Endothelial cell of umbilical vein (primary cell): ENCODE measurements at regions of chr6 and their contacts with region 1.

Region 1: DNA sequence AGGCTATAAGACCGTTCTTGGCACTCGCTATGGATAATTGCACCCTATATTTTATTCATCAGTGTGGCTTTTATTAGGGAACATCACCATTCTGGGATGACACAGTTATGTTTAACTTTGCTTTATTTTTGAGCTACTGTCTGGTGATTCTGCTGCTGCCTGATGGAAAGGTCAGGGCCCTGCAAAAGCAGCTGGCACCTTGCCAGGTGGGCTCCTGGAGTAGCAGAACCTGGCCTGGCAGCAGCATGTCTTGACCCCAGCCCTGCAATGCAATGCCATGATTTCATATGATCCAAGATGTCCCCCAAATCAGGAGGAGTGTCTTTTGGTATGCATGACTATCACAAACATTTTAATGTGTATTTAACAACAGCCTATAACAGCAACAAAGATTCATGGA is 228.4 kb upstream of the RSPO3 start:
- DNase-seq: peak; percentile 14
- H3K4me3 ChIP-seq: no peak overlapping the region
- H3K27ac ChIP-seq: peak overlapping the region; percentile 76
- H3K4me1 ChIP-seq: peaks cover 37% of the 10 kb centered on the region
- H3K27me3 ChIP-seq: no peaks in the 10 kb centered on the region
- CTCF ChIP-seq: no peak
- POLR2A ChIP-seq: no peak

Region 2: GRCh38 chr6:126811321-126811720 is 78.7 kb before region 1 on chr6:
- CTCF ChIA-PET with region 1: interaction called, 10 read pairs
- POLR2A ChIA-PET with region 1: no interaction called
- dilution Hi-C with region 1: no loop called
- intact Hi-C with region 1: loop called (anchors 1 kb)
- DNase-seq: peak; percentile 85
- H3K4me3 ChIP-seq: no peak overlapping the region
- H3K27ac ChIP-seq: peak overlapping the region; percentile 79
- H3K4me1 ChIP-seq: peaks cover 27% of the 10 kb centered on the region
- H3K27me3 ChIP-seq: no peaks in the 10 kb centered on the region
- CTCF ChIP-seq: no peak
- POLR2A ChIP-seq: no peak

Region 3: DNA sequence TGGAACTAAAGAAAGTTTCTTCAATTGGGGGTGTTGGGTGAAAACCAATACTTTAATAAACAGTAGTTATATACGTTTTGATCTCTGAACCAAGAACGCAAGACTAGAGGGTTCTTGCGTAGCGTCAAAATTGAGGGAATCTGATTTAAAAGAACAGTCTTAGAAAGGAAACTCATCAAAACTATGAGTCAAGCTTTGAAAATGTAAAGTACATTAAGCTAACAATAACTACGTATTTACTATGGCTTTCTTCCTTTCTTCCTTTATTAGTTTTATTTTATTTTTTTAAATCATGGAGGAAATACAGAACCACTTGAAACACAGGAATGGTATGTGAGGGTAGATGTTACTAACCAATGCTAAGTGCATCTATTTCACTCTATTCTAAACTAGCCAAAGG is 58.6 kb before region 1 on chr6:
- CTCF ChIA-PET with region 1: no interaction called
- POLR2A ChIA-PET with region 1: no interaction called
- dilution Hi-C with region 1: no loop called
- intact Hi-C with region 1: loop called (anchors 1 kb)
- DNase-seq: peak; percentile 72
- H3K4me3 ChIP-seq: no peak overlapping the region
- H3K27ac ChIP-seq: peak overlapping the region; percentile 88
- H3K4me1 ChIP-seq: peaks cover 20% of the 10 kb centered on the region
- H3K27me3 ChIP-seq: no peaks in the 10 kb centered on the region
- CTCF ChIP-seq: no peak
- POLR2A ChIP-seq: no peak

Region 4: DNA sequence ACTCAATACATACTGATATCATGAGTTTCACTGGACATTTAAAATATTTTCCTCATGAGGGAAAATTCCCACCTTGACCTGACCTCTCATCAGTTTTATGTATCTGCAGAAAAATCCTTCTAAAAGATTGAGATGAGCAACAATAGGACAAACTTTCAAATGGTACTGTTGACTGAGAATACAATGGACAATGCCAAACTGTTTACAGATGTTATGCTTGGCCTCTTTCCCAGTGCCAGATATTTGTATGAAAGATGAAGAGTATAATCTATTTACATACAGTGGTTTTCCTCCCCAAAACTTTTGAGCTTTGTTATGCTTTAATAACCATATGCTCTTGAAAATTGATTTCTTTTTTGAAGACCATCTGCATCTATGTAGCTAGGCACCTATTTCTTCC is 16.7 kb before region 1 on chr6:
- CTCF ChIA-PET with region 1: interaction called, 3 read pairs
- POLR2A ChIA-PET with region 1: no interaction called
- dilution Hi-C with region 1: no loop called
- intact Hi-C with region 1: loop called (anchors 2 kb)
- DNase-seq: peak; percentile 47
- H3K4me3 ChIP-seq: no peak overlapping the region
- H3K27ac ChIP-seq: no peak overlapping the region
- H3K4me1 ChIP-seq: peaks cover 14% of the 10 kb centered on the region
- H3K27me3 ChIP-seq: no peaks in the 10 kb centered on the region
- CTCF ChIP-seq: no peak
- POLR2A ChIP-seq: no peak

Region 5: DNA sequence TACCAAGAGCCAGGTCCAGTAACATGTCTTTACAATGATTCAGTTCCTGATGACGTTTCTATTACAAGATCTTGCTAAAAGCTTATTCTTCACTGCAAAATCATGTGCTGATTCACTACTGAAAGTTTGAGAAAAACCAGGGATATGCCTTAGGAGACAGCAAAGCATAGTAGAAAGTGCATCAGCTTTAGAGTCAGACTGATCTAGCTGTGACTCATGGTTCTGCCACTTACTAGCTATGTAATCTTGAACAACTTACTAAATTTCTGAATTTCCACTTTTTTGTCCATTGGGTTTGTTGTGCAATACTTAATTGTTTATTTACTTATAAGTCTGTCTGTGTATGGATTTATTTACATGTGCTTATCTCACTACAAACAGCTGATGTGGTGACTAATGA is 29.9 kb after region 1 on chr6:
- CTCF ChIA-PET with region 1: interaction called, 3 read pairs
- POLR2A ChIA-PET with region 1: interaction called, 4 read pairs
- dilution Hi-C with region 1: no loop called
- intact Hi-C with region 1: loop called (anchors 1 kb)
- DNase-seq: peak; percentile 79
- H3K4me3 ChIP-seq: no peak overlapping the region
- H3K27ac ChIP-seq: peak overlapping the region; percentile 68
- H3K4me1 ChIP-seq: peaks cover 49% of the 10 kb centered on the region
- H3K27me3 ChIP-seq: no peaks in the 10 kb centered on the region
- CTCF ChIP-seq: no peak
- POLR2A ChIP-seq: no peak

Region 6: DNA sequence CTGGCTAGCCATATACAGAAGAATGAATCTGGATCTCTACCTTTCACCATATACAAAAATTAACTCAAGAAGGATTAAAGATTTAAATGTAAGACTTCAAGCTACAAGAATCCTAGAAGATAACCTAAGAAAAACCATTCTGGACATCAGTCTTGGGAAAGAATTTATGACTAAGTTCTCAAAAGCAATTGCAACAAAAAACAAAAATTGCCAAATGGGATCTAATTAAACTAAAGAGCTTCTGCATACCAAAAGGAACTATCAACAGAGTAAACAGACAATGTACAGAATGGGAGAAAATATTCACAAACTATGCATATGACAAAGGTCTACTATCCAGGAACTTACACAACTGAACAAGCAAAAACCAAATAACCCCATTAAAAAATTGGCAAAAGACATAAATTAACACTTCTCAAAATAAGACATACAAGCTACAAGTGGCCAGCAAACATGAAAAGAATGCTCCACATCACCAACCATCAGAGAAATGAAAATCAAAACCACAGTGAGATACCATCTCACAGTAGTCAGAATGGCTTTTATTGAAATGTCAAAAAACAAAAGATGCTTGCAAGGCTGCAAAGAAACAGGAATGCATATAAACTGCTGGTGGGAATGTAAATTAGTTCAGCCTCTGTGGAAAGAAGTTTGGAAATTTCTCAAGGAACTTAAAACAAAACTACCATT is 161.7 kb after region 1 on chr6:
- CTCF ChIA-PET with region 1: no interaction called
- POLR2A ChIA-PET with region 1: no interaction called
- dilution Hi-C with region 1: no loop called
- intact Hi-C with region 1: loop called (anchors 1 kb)
- DNase-seq: no peak
- H3K4me3 ChIP-seq: no peak overlapping the region
- H3K27ac ChIP-seq: no peak overlapping the region
- H3K4me1 ChIP-seq: peaks cover 24% of the 10 kb centered on the region
- H3K27me3 ChIP-seq: no peaks in the 10 kb centered on the region
- CTCF ChIP-seq: no peak
- POLR2A ChIP-seq: no peak